HCT116 (cell line): ENCODE measurements at regions of chr22 and their contacts with region 1.

Region 1: DNA sequence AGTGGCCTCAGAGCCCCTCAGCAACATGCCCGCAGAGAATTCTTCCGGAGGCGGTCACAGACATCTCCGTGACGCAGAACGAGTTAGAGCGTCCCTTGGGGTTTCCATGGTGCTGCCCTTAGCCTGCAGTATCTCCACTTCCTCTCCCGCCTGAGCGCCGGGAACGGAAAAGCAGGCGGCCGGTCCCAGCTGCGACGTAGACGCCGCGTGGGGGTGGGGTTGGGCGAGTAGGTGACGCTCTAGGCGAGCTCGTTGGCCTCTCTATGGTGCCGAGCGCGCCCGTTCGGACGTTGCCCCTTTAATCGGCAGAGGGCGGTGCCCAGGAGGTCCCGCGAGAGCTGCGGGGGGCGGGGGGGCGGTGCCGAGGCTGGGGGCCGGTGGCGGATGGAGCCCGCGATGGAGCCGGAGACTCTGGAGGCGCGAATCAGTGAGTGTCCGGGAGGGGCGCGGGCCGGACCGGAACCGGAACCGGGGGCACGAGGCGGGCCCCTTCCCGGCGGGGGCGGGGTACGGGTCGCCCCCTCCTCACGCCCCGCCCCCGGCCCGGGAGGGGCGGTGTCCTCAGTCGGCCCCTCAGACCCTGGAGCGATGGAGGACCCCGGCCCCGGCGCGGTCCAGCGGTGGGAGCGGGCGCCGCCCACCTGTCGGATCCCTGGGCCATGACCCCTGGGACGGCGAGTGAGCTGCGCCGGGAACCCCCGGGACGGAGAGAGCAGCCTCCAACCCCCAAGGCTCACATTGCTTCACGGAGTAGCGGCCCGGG is at the start of gene GGA1:
- DNase-seq: peak; percentile 96
- ATAC-seq: peak; percentile 78
- H3K4me3 ChIP-seq: peak within 1 kb of the TSS; percentile 82 to 93
- H3K27ac ChIP-seq: peak within 1 kb of the TSS; percentile 100
- H3K4me1 ChIP-seq: peaks cover 38 to 55% of the 10 kb centered on the region in 2 experiments
- H3K27me3 ChIP-seq: no peaks in the 10 kb centered on the region
- CTCF ChIP-seq: no peak
- POLR2A ChIP-seq: no peak
- RAD21 ChIP-seq: no peak
- total RNA-seq, gene GGA1: 89.8 TPM

Region 2: GRCh38 chr22:37538590-37539357 is 69.9 kb before region 1 on chr22:
- CTCF ChIA-PET with region 1: interaction called, 25 read pairs
- POLR2A ChIA-PET with region 1: interaction called, 4 read pairs
- RAD21 ChIA-PET with region 1: interaction called in 1 of 2 experiments, 5 read pairs
- intact Hi-C with region 1: loop called (anchors 1 kb)
- DNase-seq: peak; percentile 91
- ATAC-seq: peak; percentile 99
- H3K4me3 ChIP-seq: peak overlapping the region in 1 of 2 experiments; percentile 32; a peak in 2 of 4 replicates
- H3K27ac ChIP-seq: no peak overlapping the region
- H3K4me1 ChIP-seq: peaks cover 26 to 50% of the 10 kb centered on the region in 2 experiments
- H3K27me3 ChIP-seq: no peaks in the 10 kb centered on the region
- CTCF ChIP-seq: peak; percentile 91 to 98 (median 96)
- POLR2A ChIP-seq: no peak
- RAD21 ChIP-seq: peak; percentile 100

Region 3: GRCh38 chr22:37594237-37594636 is 14.4 kb before region 1 on chr22:
- CTCF ChIA-PET with region 1: interaction called, 74 read pairs
- POLR2A ChIA-PET with region 1: interaction called, 38 read pairs
- RAD21 ChIA-PET with region 1: interaction called in 1 of 2 experiments, 3 read pairs
- intact Hi-C with region 1: loop called (anchors 1 kb)
- DNase-seq: no peak
- ATAC-seq: peak; percentile 70
- H3K4me3 ChIP-seq: no peak overlapping the region
- H3K27ac ChIP-seq: no peak overlapping the region
- H3K4me1 ChIP-seq: peaks cover 4 to 22% of the 10 kb centered on the region in 2 experiments; a peak in 3 of 4 replicates
- H3K27me3 ChIP-seq: no peaks in the 10 kb centered on the region
- CTCF ChIP-seq: peak; percentile 35 to 68 (median 63); a peak in 5 of 6 replicates
- POLR2A ChIP-seq: no peak
- RAD21 ChIP-seq: peak; percentile 34; the same call in 1 of the 2 replicates

Region 4: DNA sequence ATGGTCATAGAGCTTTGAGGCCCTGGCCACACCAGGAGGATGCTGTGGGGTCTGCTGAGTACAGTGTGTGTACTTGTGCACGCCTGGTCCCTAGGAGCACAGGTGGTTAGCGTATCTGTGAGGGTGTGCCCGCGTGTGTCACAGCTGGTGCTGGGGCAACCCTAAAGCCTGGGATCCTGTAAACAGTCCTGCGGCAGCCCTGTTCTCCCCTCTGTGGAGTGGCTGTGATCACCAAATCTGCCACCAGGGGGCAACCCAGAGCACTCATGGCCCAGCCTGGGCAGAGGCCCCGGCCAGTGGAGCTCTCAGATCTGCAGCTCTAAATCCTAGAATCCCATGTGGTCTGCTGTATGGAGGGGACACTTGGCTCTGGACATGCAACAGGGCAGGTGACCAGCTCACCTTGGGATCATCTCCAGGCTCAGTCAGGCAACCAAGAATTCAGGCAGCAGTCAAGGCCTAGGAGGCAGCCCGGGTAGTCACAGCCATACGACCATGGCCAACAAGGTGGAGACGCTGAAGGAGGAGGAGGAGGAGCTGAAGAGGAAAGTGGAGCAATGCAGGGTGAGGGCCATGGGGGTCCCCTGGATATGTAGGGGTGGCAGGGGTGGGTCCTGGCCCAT is 34.7 kb after region 1 on chr22:
- CTCF ChIA-PET with region 1: interaction called, 12 read pairs
- POLR2A ChIA-PET with region 1: interaction called, 3 read pairs
- RAD21 ChIA-PET with region 1: no interaction called
- intact Hi-C with region 1: no loop called
- DNase-seq: no peak
- ATAC-seq: peak; percentile 73
- H3K4me3 ChIP-seq: no peak overlapping the region
- H3K27ac ChIP-seq: no peak overlapping the region
- H3K4me1 ChIP-seq: peaks cover 34 to 60% of the 10 kb centered on the region in 2 experiments
- H3K27me3 ChIP-seq: no peaks in the 10 kb centered on the region
- CTCF ChIP-seq: peak; percentile 85 to 94 (median 93)
- POLR2A ChIP-seq: no peak
- RAD21 ChIP-seq: peak; percentile 81

Region 5: DNA sequence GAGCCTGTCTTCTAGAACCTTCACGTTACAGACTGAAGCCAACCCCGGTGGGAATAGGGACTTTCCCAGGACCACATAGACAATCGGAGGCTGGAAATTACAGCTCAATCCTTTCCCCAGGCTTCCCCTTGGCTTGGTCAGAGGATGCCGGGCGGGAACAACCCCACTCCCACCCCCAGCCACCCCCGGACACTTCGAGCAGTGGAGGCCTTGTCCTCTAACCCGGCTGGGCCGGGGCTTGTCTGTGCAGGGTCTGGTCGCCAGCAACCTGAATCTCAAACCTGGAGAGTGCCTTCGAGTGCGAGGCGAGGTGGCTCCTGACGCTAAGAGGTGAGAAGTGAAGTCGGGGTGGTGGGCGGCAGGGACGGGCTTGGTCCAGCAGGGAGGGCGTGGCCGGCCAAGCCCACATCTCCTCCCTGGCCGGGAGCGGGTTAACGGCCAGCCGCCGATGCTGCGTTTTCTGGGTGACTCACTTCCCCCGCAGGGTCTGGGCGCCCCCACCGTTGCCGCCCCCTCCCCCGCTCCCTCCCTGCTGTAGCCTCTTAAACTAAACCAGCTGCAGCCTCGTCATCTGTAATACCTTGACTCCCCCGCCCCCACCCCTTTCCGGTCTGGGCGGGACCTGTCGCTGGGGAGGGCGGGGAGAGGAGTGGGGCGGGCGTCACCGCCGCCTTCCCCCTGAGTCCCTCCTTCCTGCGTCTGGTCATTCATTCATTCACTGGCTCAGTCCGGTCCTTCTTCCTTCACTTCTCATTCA is 68.3 kb after region 1 on chr22:
- CTCF ChIA-PET with region 1: interaction called, 17 read pairs
- POLR2A ChIA-PET with region 1: interaction called, 16 read pairs
- RAD21 ChIA-PET with region 1: interaction called in 1 of 2 experiments, 3 read pairs
- intact Hi-C with region 1: no loop called
- DNase-seq: peak; percentile 69
- ATAC-seq: peak; percentile 49
- H3K4me3 ChIP-seq: peak overlapping the region; percentile 71 to 86
- H3K27ac ChIP-seq: peak overlapping the region; percentile 97
- H3K4me1 ChIP-seq: peaks cover 40 to 75% of the 10 kb centered on the region in 2 experiments
- H3K27me3 ChIP-seq: no peaks in the 10 kb centered on the region
- CTCF ChIP-seq: no peak
- POLR2A ChIP-seq: no peak
- RAD21 ChIP-seq: no peak

Region 6: DNA sequence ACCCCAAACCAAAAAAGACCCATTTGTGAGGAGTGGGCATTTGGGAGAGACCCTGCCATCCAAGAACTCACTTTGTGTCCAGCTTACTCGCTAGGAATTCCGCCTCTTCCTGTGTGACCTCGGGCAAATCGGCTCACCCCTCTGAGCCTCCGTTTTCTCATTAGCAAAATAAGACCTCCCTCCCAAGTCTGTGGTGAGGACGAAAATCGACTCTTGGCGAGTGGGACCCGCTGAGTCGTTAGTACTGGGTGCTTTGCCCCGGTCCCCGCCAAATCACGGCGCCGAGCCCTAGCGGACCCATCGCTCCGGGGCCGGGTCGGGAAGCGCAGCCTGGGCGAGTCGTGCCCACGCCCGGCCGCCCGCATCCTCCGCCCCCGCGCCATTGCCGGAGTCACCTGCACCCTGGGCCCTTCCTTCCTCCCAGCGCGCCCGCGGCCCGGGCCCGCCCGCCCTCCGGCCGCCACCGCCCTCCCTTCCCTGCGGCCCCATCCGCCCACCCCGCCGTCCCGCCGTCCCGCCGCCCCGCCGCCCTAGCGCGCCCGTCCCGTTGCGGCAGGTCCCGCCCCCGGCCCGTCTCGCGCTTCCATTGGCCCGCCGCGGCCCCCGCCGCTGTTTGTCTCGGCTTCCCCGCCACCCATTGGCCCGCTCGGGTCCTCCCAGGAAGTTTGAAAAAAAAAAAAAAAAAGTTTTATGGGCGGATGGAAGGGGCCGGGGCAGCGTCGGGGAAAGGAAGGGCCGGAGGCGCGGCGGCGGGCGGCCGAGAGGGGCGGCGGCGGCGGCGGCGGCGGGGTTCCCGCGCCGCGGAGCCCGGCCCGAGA is 137.1 kb after region 1 on chr22:
- CTCF ChIA-PET with region 1: interaction called, 4 read pairs
- POLR2A ChIA-PET with region 1: interaction called, 5 read pairs
- RAD21 ChIA-PET with region 1: no interaction called
- intact Hi-C with region 1: loop called (anchors 2 kb)
- DNase-seq: no peak
- ATAC-seq: peak; percentile 47
- H3K4me3 ChIP-seq: peak overlapping the region; percentile 94 to 98
- H3K27ac ChIP-seq: peak overlapping the region; percentile 98
- H3K4me1 ChIP-seq: peaks cover 71 to 85% of the 10 kb centered on the region in 2 experiments
- H3K27me3 ChIP-seq: no peaks in the 10 kb centered on the region
- CTCF ChIP-seq: no peak
- POLR2A ChIP-seq: no peak
- RAD21 ChIP-seq: no peak